PC-9 (cell line): ENCODE measurements at regions of chr10 and their contacts with region 1.

Region 1: DNA sequence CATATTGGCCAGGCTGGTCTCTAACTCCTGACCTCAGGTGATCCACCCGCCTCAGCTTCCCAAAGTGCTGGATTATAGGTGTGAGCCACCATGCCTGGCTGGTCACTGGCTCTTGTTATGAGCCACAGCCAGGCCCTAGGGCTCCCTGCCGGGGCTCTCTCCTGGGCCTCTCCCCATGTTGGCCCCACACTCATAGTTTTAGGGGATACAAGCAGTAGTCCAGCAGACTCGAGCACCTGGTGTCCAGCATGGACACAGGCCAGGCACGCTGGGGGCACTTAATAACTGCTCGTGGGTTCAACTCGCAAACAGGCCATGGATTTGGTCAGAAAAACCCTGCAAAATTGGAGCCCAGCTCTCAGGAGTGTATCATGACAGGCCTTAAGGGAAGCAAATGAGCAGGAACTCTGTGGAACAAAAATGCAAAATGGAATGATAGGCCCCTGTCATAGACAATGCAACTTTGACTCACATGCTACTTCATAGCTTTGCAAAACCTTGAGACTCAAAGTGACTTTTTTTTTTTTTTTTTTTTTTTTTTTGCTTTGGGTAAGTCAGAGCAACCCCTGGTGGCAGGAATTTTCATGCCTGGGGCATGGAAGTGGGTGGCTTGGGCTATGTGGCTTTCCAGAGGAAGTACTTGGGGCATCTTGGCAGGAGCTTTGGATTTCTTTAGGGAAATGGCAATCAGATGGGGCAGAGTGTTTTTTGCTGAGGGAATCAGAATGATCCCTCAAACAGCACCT is 62.5 kb downstream of the TACC2 start:
- DNase-seq: peak; percentile 68 to 80
- H3K4me3 ChIP-seq: no peak overlapping the region
- H3K27ac ChIP-seq: no peak overlapping the region
- H3K4me1 ChIP-seq: peaks cover 9% of the 10 kb centered on the region; the same call in 1 of the 2 replicates
- H3K27me3 ChIP-seq: no peaks in the 10 kb centered on the region
- CTCF ChIP-seq: peak; percentile 75

Region 2: DNA sequence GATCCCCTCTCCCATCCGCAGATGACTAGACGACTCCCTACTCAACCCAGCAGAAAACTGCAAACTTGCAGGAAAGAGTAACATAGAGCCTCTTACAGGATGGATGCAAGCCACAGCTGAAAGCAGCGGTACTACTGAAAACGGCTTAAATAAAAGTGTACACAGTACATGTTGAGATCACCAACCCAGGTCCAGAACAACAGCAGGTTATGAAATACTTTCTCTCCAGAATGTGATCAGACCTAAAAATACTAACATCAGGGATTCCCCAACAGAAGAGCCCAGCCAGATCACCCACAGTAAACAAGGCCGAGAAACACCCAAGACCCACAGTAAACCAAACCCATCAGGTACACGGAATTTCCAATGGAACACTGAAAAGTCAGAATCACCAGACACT is 136.8 kb before region 1 on chr10:
- CTCF ChIA-PET with region 1: no interaction called
- POLR2A ChIA-PET with region 1: no interaction called
- intact Hi-C with region 1: no loop called
- DNase-seq: no peak
- H3K4me3 ChIP-seq: no peak overlapping the region
- H3K27ac ChIP-seq: no peak overlapping the region
- H3K4me1 ChIP-seq: no peaks in the 10 kb centered on the region
- H3K27me3 ChIP-seq: no peaks in the 10 kb centered on the region
- CTCF ChIP-seq: no peak

Region 3: DNA sequence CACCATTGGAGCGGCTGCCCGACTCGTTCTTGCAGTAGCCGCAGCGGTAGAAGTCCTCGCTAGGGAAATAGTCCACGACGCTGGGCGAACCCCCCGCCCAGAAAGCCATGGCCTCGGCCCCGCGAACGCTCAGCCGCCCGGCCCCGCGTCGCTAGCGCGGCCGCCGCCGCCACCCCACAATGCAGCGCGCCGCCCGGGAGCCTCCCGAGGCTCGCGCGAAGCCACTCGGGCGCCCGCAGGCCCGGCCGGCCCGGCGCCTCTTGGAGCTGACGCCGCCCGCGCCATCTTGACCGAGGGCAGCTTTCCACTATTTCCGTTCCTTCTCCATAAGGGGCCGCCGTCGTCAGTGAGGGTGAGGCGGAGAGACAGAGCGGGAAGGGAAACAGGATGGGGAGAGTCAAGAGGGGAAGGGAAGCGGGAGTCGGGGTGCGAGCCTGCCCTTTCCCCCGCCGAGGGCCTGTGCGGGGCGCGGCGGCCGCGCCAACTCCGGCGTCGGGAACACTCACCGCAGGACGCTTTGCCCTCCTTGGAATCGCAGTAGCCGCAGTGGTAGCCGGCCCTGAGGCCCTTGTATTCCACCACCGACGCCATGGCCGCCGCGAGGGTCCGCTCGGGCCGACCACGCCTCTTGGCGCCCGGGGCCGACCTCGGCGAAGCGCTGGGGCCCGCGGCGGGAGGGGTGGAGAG is 123.4 kb before region 1 on chr10 and contains the start of gene ATE1:
- CTCF ChIA-PET with region 1: interaction called, 10 read pairs
- POLR2A ChIA-PET with region 1: no interaction called
- intact Hi-C with region 1: loop called (anchors 5 kb)
- DNase-seq: peak; percentile 59 to 76
- H3K4me3 ChIP-seq: peak within 1 kb of the TSS; percentile 73
- H3K27ac ChIP-seq: peak within 1 kb of the TSS; percentile 82
- H3K4me1 ChIP-seq: 0 out of 2 replicates have a peak, but pooled peaks cover 5% of the 10 kb centered on the region
- H3K27me3 ChIP-seq: no peaks in the 10 kb centered on the region
- CTCF ChIP-seq: no peak
- total RNA-seq, gene ATE1: 12.2 and 14.8 TPM in 2 replicates

Region 4: DNA sequence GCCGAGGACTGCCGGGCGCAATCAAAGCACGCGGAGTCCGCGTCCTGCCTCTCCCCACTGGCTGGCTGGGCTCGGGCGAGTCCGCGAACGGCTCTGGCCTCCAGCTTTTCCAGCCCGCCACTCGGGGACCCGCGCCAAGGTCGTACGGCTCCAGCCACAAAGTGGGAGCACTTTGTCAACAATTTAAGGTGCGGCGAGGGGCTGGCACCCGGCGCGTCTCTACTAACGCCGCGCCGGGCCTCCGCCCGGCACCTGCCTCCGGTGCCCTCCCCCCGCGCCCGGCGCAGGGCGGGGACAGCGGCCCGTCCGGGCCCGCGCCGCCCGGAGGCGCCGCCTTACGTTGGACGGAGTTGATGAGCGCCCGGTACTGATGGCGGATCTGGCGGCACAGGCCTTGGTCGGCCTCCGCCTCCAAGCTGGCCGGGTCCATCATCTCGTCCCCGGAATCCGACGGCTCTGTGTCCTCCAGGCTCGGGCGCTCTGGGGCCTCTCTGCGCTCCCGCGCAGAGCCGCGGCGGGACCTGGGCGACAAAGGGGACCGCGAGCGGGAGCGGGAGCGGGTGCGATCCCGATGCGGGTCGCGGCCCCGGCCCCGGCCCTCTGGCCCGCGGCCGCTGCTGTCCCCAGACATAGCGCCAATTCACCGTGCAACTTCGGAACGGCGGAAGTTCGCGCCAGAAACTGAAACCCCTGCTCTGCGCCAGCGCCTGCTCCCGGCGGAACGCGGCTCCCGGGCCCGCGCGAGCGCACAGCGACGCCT is 76.7 kb before region 1 on chr10 and contains the start of gene NSMCE4A:
- CTCF ChIA-PET with region 1: no interaction called
- POLR2A ChIA-PET with region 1: no interaction called
- intact Hi-C with region 1: loop called (anchors 10 kb)
- DNase-seq: peak; percentile 44 to 63
- H3K4me3 ChIP-seq: peak within 1 kb of the TSS; percentile 83
- H3K27ac ChIP-seq: peak within 1 kb of the TSS; percentile 77
- H3K4me1 ChIP-seq: peaks cover 6% of the 10 kb centered on the region
- H3K27me3 ChIP-seq: no peaks in the 10 kb centered on the region
- CTCF ChIP-seq: no peak; the same call in 1 of the 2 replicates
- total RNA-seq, gene NSMCE4A: 26.8 and 32.4 TPM in 2 replicates

Region 5: GRCh38 chr10:121988356-121989316 is 62.8 kb before region 1 on chr10 and contains the start of gene TACC2:
- CTCF ChIA-PET with region 1: no interaction called
- POLR2A ChIA-PET with region 1: no interaction called
- intact Hi-C with region 1: no loop called
- DNase-seq: no peak
- H3K4me3 ChIP-seq: no peak within 1 kb of the TSS
- H3K27ac ChIP-seq: peak within 1 kb of the TSS; percentile 44; the same call in 1 of the 2 replicates
- H3K4me1 ChIP-seq: peaks cover 3% of the 10 kb centered on the region
- H3K27me3 ChIP-seq: no peaks in the 10 kb centered on the region
- CTCF ChIP-seq: no peak
- total RNA-seq, gene TACC2: 15.8 and 19.6 TPM in 2 replicates

Region 6: DNA sequence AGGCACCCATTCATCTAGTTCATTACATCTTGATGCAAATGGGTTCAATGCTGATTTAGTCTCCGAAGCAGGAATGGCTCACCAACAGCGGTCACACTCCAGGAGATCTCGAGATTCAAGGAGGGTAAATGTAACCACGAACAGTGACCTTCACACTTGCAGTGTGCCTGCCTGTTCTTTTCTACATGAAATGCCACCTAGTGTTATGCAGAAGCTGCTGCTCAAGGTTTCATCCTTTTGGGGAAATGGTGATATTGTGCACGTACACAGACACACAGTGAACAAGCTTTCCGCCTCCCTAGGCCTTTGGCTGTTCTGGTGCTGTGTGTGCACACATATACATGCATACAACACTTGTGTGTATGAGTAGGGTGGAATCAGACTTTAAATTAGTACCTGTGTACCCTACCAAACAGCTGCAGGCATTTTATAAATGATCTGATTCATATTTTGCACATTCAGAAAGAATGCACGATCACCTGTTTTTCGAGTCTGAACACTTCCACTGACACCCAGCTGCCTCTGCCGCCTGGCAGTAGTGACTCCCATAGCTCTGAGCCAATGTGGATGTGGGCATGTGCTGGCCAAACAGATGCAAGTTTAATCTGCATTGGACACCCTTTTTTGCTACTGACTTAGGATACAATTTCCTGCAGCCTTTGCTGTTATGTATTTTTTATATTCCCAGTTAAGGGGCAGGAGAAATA is 38.0 kb after region 1 on chr10:
- CTCF ChIA-PET with region 1: no interaction called
- POLR2A ChIA-PET with region 1: no interaction called
- intact Hi-C with region 1: loop called (anchors 1 kb)
- DNase-seq: peak; percentile 42 to 90
- H3K4me3 ChIP-seq: peak overlapping the region; percentile 14; the same call in 1 of the 2 replicates
- H3K27ac ChIP-seq: peak overlapping the region; percentile 28; the same call in 1 of the 2 replicates
- H3K4me1 ChIP-seq: peaks cover 20% of the 10 kb centered on the region
- H3K27me3 ChIP-seq: no peaks in the 10 kb centered on the region
- CTCF ChIP-seq: no peak; the same call in 1 of the 2 replicates